Left lung (tissue), 14 donors: ENCODE measurements at regions of chr22 and their contacts with region 1.

Region 1: GRCh38 chr22:45096256-45096907 is 67.3 kb upstream of the NUP50 start:
- DNase-seq: peak in 2 of 4 donors; percentile 40 to 64
- ATAC-seq: peak; percentile 93
- H3K4me3 ChIP-seq: no peak overlapping the region
- H3K27ac ChIP-seq: no peak overlapping the region
- H3K4me1 ChIP-seq: no peaks in the 10 kb centered on the region
- H3K27me3 ChIP-seq: peaks cover 0 to 76% of the 10 kb centered on the region in 2 donors
- CTCF ChIP-seq: peak; percentile 65 to 68

Region 2: DNA sequence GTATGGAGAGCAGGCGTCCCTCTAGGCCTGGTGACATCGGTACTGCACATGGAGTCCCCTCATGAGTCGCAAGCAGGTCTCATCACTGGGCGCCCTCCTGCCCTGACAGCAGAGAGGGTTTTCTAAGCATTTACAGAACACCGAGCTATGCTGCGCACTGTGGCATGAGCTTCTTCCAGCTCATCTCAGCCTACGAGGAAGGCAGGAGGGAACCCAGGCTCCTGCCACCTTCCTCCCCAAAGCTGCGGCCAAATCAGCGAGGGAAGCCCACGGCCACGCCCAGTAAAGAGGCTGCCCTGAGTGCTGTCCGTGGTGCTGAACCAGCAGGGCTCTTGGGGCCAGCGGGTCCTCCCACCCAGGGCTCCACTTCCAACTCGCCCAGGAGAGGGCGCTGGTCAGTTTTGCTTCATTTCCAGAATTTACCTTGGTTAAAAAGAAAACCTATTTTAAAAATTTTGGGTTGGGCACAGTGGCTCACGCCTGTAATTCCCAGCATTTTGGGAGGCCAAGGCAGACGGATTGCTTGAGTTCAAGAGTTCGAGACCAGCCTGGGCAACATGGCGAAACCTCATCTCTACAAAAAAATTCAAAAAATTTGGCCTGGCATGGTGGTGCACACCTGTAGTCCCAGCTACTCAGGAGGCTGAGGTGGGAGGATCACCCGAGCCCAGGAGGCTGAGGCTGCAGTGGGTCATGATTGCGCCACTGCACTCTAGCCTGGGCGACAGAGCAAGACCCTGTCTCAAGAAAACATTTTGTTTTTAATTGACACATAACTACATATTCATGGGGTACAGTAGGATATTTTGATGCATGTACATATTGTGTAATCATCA is 120.7 kb before region 1 on chr22:
- intact Hi-C with region 1: loop called in 1 of 2 experiments (anchors 10 kb)
- DNase-seq: peak; percentile 78 to 92 (median 84)
- ATAC-seq: peak; percentile 100
- H3K4me3 ChIP-seq: no peak overlapping the region
- H3K27ac ChIP-seq: no peak overlapping the region
- H3K4me1 ChIP-seq: no peaks in the 10 kb centered on the region
- H3K27me3 ChIP-seq: peaks cover 0 to 65% of the 10 kb centered on the region in 2 donors
- CTCF ChIP-seq: peak; percentile 54 to 59

Region 3: GRCh38 chr22:45007391-45008185 is 88.8 kb before region 1 on chr22:
- intact Hi-C with region 1: no loop called
- DNase-seq: peak in 3 of 4 donors; percentile 68 to 80 (median 70)
- ATAC-seq: peak; percentile 49
- H3K4me3 ChIP-seq: peak overlapping the region in 1 of 2 donors; percentile 29
- H3K27ac ChIP-seq: no peak overlapping the region
- H3K4me1 ChIP-seq: peaks cover 6 to 34% of the 10 kb centered on the region in 2 donors
- H3K27me3 ChIP-seq: peaks cover 61 to 99% of the 10 kb centered on the region in 2 donors
- CTCF ChIP-seq: no peak